ENCODE measurements at regions of chr2 and their contacts with region 1.

Region 1: GRCh38 chr2:32627814-32628579 is at the start of gene TTC27:
- DNase-seq: peak; percentile 95 to 97 (median 96)
- ATAC-seq: peak; percentile 99 to 100 (median 100)
- H3K4me3 ChIP-seq: peak within 1 kb of the TSS; percentile 68 to 95 (median 76)
- H3K27ac ChIP-seq: peak within 1 kb of the TSS in 11 of 12 donors; percentile 17 to 78 (median 67)
- H3K4me1 ChIP-seq: peaks cover 0 to 25% (median 15%) of the 10 kb centered on the region in 12 donors
- H3K27me3 ChIP-seq: no peaks in the 10 kb centered on the region
- CTCF ChIP-seq: peak in 1 of 12 donors; percentile 16
- POLR2A ChIP-seq: peak in 1 of 2 donors; percentile 39
- total RNA-seq, gene TTC27: 8.0 to 18.1 (median 11.0) TPM

Region 2: DNA sequence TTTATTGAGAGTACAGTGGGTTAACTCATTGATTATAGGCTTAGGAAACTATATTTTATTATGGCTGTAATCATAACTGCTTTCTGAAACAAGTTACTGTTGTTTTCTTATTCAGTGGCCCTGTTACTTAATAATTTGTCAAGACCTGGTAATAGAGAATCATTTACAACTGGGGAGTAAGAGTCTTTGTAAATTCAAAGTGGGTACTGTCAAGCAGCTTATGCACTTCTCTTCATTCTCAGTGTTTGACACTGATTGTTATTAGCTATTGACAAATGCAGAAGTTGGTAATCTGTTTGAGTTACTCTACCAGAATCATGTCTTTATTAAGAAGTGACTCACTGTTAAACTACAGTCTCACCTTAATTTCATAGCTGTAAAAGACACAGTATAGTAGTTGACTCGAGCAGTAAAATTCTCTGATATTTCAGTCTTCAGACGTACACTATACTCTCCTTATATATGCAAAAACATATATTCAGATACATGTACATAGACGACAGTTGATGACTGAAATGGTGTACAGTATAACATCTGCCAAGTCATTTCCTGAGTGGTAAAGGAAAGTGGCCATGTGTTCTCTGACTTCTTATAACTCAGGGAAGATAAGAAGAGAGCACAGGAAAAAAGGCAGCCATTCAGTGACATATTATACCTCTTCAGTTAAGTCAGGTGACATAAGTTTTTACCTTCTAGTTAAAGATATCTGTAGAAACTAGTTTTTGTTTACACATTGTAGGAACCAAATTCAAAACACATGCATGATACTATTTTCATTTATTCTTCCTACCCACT is 36.1 kb before region 1 on chr2:
- intact Hi-C with region 1: no loop called
- DNase-seq: no peak
- ATAC-seq: peak in 2 of 4 donors; percentile 22 to 57
- H3K4me3 ChIP-seq: no peak overlapping the region
- H3K27ac ChIP-seq: peak overlapping the region in 1 of 12 donors; percentile 9
- H3K4me1 ChIP-seq: peaks cover 0 to 10% (median 0%) of the 10 kb centered on the region in 12 donors
- H3K27me3 ChIP-seq: no peaks in the 10 kb centered on the region
- CTCF ChIP-seq: no peak
- POLR2A ChIP-seq: no peak

Region 3: DNA sequence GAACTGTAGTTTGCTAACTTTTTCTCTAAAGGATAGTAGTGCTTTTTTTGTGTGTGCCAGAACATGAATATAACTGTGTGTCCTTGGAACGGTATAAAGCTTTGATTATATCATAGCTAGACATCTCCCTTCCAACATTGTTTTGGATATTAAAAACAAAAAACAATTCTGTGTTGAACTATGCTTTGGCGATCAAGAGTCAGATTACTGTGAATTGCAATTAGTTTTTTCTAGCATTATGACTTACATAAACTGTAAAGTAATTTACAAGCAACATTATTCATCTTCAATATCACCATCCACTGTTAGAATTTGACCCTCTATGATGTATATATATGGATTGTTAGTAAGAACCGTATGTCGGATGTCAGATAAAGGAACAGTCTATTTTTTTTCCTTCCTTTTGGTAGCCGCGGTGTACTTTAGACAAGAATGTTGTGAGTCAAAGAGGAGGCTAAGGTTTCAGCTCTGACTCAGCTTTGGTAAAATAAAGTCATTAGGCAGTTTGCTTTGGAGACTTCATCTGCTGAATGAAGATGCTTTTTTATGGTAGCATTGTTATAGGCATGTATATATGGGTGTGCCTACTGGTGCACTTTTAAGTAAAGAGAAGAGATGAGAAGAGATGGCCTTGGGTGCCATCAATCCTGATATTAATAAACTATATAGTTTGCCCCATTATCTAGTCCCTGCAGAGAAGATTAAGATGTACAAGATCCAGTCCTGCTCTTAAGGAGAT is 395.2 kb after region 1 on chr2:
- intact Hi-C with region 1: loop called in 1 of 10 experiments (anchors 10 kb)
- DNase-seq: no peak
- ATAC-seq: peak in 1 of 4 donors; percentile 49
- H3K4me3 ChIP-seq: no peak overlapping the region
- H3K27ac ChIP-seq: peak overlapping the region in 9 of 12 donors; percentile 1 to 56 (median 43)
- H3K4me1 ChIP-seq: peaks cover 0 to 38% (median 15%) of the 10 kb centered on the region in 12 donors
- H3K27me3 ChIP-seq: no peaks in the 10 kb centered on the region
- CTCF ChIP-seq: no peak
- POLR2A ChIP-seq: no peak

Region 4: DNA sequence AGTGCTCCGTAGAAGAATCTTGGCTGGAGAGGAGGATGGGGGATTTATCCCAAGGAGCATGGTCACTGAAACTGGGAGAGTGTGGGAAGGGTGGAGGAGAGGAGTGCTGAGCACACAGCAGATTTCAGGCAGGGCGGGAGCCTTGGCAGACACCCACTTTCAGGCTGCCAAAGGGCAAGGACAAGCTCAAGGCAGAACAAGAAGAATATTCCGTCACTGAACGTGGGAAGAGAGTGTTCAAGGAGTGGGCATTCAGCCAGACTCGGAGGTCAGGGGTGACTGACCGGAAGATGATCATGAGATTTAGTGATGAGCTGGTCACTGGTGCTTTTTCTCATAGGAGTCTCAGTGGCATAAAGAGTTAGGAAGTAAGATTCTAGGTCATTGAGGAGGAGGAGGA is 712.3 kb after region 1 on chr2:
- intact Hi-C with region 1: no loop called
- DNase-seq: peak; percentile 73 to 90 (median 80)
- ATAC-seq: peak; percentile 85 to 97 (median 94)
- H3K4me3 ChIP-seq: no peak overlapping the region
- H3K27ac ChIP-seq: peak overlapping the region in 5 of 12 donors; percentile 2 to 46 (median 25)
- H3K4me1 ChIP-seq: peaks cover 0 to 13% (median 7%) of the 10 kb centered on the region in 12 donors
- H3K27me3 ChIP-seq: no peaks in the 10 kb centered on the region
- CTCF ChIP-seq: no peak
- POLR2A ChIP-seq: no peak